K562 (cell line): ENCODE measurements at regions of chr11 and their contacts with region 1.

Region 1: DNA sequence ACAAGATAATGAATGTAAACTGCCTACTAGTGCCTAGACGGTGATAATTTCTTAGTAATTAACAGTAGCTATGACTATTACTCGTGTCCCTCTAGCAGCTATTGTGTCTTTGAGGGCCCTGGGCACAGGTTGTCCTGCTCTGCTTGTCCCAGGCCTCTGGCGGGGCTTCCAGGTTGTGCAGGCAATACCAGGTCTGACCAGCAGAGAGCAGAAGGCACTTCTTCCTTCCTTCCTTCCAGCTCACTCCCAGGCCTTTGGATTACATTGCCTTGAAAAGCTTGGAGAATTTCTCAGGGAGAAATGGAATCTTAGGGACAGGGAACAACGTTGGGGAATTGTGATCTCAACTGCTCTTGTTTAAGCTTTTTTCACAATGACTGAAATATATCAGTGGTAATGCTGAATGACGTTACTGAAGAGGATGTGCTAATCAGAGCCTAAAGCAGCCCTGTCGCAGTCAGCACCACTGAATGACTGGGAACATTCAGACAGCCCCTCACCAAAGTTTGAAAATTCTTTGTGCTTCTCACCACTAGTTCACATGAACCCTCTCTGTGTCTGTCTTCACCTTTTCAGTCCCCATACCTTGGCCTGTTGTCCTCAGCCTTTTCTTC is 8.4 kb upstream of the CCKBR start:
- DNase-seq: peak; percentile 72 to 77 (median 76)
- ATAC-seq: peak; percentile 99
- H3K4me3 ChIP-seq: no peak overlapping the region
- H3K27ac ChIP-seq: no peak overlapping the region
- H3K4me1 ChIP-seq: peaks cover 3 to 15% of the 10 kb centered on the region in 2 experiments; a peak in 4 of 5 replicates
- H3K27me3 ChIP-seq: no peaks in the 10 kb centered on the region
- CTCF ChIP-seq: peak; percentile 88 to 99 (median 91)
- EP300 ChIP-seq: no peak
- POLR2A ChIP-seq: no peak
- RAD21 ChIP-seq: peak; percentile 57 to 59

Region 2: DNA sequence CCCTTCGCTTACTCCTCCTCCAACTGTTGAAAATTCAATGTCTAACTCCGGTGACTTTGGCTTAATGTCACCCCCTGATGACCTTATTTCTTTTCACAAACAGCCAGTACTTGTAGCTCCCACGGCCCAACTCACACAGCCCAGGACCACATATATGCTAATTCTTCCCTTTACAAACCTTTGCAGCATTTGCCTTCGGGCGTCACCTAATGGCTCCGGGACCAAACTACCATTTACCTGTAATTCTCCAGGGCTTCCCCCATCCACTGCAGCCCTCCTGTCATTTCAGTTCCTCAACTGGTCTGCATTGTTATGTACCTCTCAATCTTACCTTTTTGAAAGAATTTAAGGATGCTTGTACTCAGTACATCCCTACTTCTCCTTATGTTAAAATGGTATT is 173.5 kb before region 1 on chr11:
- CTCF ChIA-PET with region 1: no interaction called
- POLR2A ChIA-PET with region 1: no interaction called
- in situ Hi-C with region 1: no loop called
- intact Hi-C with region 1: no loop called
- DNase-seq: peak in 1 of 4 experiments; percentile 1
- ATAC-seq: no peak; the same call in 2 of the 3 replicates
- H3K4me3 ChIP-seq: no peak overlapping the region
- H3K27ac ChIP-seq: no peak overlapping the region
- H3K4me1 ChIP-seq: no peaks in the 10 kb centered on the region
- H3K27me3 ChIP-seq: no peaks in the 10 kb centered on the region
- CTCF ChIP-seq: 0 out of 6 replicates have a peak, but pooled peaks of 1 of the 3 experiments have one; percentile 5
- EP300 ChIP-seq: no peak
- POLR2A ChIP-seq: no peak
- RAD21 ChIP-seq: no peak

Region 3: DNA sequence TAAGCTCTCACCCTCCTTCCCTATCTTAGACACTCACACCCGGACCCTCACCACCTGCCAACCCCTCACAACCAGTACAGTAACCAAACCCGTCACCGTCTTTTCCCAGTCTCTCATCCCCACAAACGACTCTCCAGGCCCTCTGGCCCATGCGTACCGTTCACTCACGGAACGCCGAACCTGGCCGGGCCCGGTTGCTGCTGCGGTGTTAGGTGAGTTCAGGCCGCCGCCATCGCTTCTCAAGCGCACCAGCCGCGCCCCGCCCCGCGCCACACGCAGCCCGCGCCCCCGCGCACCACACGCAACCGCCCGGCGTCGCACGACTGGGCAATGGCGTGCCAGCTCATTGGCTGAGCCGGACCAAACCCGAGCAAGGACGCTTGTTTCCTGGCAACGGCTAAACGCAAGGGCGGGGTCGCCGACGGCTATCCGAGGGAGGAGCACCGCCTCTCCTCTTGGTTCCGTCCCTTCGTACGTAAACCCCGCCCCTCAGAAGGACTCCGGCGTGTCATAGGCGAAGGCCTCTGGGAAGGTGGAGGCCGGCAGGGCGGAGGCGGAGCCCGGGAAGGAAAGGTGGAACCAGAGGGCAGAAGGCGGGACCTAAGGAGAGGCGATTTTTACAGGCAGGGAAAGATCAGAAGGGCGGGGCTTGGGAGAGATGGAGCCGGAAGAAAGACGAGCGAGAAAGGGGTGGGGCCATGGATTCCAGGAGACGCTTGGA is 16.7 kb before region 1 on chr11 and contains the start of gene FHIP1B:
- CTCF ChIA-PET with region 1: no interaction called
- POLR2A ChIA-PET with region 1: interaction called, 16 read pairs
- in situ Hi-C with region 1: no loop called
- intact Hi-C with region 1: no loop called
- DNase-seq: peak; percentile 96 to 99 (median 96)
- ATAC-seq: peak; percentile 94
- H3K4me3 ChIP-seq: peak within 1 kb of the TSS; percentile 64
- H3K27ac ChIP-seq: peak within 1 kb of the TSS; percentile 71
- H3K4me1 ChIP-seq: peaks cover 0 to 26% of the 10 kb centered on the region in 2 experiments
- H3K27me3 ChIP-seq: peaks cover 0 to 4% of the 10 kb centered on the region in 2 experiments; a peak in 1 of 5 replicates
- CTCF ChIP-seq: no peak
- EP300 ChIP-seq: no peak
- POLR2A ChIP-seq: peak; percentile 61
- RAD21 ChIP-seq: no peak
- polyA plus RNA-seq, gene FHIP1B: 0.94 to 1.1 TPM

Region 4: DNA sequence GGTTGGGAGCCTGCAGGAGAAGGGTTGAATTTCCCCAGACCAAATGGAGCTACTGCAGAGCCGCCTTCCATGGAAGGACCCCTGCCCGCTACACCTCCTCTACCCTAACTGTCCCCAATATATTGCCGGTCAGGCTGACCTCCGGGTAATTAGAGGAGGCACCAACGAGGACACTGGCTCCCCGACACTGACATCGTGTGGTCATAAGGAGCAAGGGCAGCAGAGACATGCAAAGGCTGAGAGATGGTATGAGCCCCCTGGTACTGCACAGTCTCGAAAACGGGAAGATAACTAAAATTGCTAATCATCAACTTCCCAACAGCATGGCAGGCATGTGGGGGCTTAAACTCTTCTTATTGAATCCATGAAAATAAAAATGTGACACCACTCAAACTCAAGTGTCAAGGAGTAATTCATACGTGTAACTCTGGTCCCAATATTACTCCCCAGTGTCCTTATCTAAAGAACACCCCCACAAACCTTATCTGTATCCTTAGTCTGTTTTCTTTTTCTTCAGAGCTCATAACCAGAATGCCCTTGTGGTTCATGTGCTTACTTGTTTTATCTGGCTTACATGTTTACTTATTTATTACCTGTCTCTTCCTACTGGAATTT is 64.7 kb after region 1 on chr11:
- CTCF ChIA-PET with region 1: interaction called, 3 read pairs
- POLR2A ChIA-PET with region 1: no interaction called
- in situ Hi-C with region 1: no loop called
- intact Hi-C with region 1: loop called (anchors 2 kb)
- DNase-seq: peak; percentile 66 to 79 (median 70)
- ATAC-seq: peak; percentile 98
- H3K4me3 ChIP-seq: no peak overlapping the region
- H3K27ac ChIP-seq: no peak overlapping the region
- H3K4me1 ChIP-seq: peaks cover 3 to 19% of the 10 kb centered on the region in 2 experiments; a peak in 4 of 5 replicates
- H3K27me3 ChIP-seq: peaks cover 21 to 39% of the 10 kb centered on the region in 2 experiments; a peak in 3 of 5 replicates
- CTCF ChIP-seq: peak; percentile 80 to 89 (median 88)
- EP300 ChIP-seq: no peak
- POLR2A ChIP-seq: no peak
- RAD21 ChIP-seq: peak; percentile 68 to 87

Region 5: GRCh38 chr11:6353367-6353987 is 102.2 kb after region 1 on chr11:
- CTCF ChIA-PET with region 1: interaction called, 9 read pairs
- POLR2A ChIA-PET with region 1: no interaction called
- in situ Hi-C with region 1: no loop called
- intact Hi-C with region 1: loop called (anchors 2 kb)
- DNase-seq: peak; percentile 61 to 71 (median 63)
- ATAC-seq: peak; percentile 89
- H3K4me3 ChIP-seq: no peak overlapping the region
- H3K27ac ChIP-seq: no peak overlapping the region
- H3K4me1 ChIP-seq: peaks cover 0 to 5% of the 10 kb centered on the region in 2 experiments; a peak in 2 of 5 replicates
- H3K27me3 ChIP-seq: peaks cover 0 to 9% of the 10 kb centered on the region in 2 experiments; a peak in 4 of 5 replicates
- CTCF ChIP-seq: peak; percentile 93 to 97 (median 94)
- EP300 ChIP-seq: no peak
- POLR2A ChIP-seq: no peak
- RAD21 ChIP-seq: peak; percentile 82 to 92

Region 6: DNA sequence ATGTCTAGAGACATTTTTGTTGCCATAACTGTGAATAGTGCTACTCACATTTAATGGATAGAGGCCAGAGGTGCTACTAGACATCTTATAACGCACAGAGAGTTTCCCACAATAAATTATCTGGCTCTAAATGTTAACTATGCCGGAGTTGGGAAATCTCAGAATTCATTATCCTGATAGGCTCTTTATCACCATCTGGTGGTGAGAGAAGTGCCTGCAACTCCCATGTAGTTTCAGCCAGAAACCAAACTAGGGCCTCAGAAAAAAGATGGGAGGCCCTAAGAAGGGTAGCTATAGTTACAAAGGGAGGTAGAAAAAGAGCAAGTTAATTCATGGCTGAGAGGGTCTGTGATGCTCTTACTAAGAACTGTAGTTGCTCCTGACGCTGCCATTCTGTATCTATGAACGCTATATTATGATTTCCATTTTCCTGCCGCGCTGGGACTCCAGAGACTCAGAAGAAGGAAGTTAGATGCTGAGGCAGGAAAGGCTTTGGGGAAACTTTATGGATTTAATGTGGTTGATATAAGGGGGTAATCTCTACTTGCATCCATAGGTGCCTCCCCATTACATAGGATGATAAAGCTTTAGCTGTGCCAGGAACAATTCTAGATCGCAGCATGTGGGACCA is 454.8 kb after region 1 on chr11:
- CTCF ChIA-PET with region 1: no interaction called
- POLR2A ChIA-PET with region 1: no interaction called
- in situ Hi-C with region 1: no loop called
- intact Hi-C with region 1: no loop called
- DNase-seq: peak; percentile 54 to 64 (median 58)
- ATAC-seq: peak; percentile 78
- H3K4me3 ChIP-seq: no peak overlapping the region
- H3K27ac ChIP-seq: no peak overlapping the region
- H3K4me1 ChIP-seq: no peaks in the 10 kb centered on the region
- H3K27me3 ChIP-seq: no peaks in the 10 kb centered on the region
- CTCF ChIP-seq: peak; percentile 81 to 89 (median 81)
- EP300 ChIP-seq: no peak
- POLR2A ChIP-seq: no peak
- RAD21 ChIP-seq: peak; percentile 81 to 89